CD4-positive, alpha-beta T cell (primary cell): ENCODE measurements at regions of chr3 and their contacts with region 1.

Region 1: DNA sequence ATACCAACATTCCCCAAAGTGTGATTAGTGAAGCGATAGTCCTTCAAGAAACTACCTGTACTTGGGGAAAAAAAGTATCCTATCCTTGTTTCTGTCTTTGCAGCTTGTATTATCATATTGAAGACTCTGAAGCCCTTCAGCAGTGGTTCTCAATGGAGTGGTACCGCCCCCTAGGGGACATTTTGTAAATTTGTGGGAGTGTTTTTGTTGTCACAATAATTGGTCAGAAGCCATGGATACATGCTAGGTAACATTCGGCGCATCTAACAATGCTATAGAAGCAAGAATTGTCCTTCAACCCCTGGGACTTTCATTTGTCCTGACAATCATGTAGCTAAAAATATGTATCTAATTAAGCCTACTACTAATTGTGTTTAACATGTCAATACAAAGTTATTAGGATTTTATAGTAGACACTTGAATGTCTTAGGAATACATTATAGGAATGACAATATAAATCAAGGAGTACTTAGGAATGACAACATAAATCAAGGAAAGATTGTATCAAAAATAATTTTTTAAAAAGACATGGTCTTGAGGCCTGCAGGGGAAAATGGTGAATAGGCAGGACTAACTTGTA is 53.7 kb downstream of the NMD3 start:
- DNase-seq: peak in 7 of 14 experiments; percentile 2 to 66 (median 45)
- ATAC-seq: no peak
- H3K4me3 ChIP-seq: no peak overlapping the region
- H3K4me3 Mint-ChIP-seq: no peak overlapping the region
- H3K27ac ChIP-seq: no peak overlapping the region
- H3K27ac Mint-ChIP-seq: no peak overlapping the region
- H3K4me1 ChIP-seq: no peaks in the 10 kb centered on the region
- H3K4me1 Mint-ChIP-seq: peaks cover 10% of the 10 kb centered on the region
- H3K27me3 ChIP-seq: no peaks in the 10 kb centered on the region
- H3K27me3 Mint-ChIP-seq: no peaks in the 10 kb centered on the region
- CTCF ChIP-seq: peak; percentile 50

Region 2: GRCh38 chr3:160707187-160707794 is 567.5 kb before region 1 on chr3:
- CTCF ChIA-PET with region 1: no interaction called
- POLR2A ChIA-PET with region 1: no interaction called
- intact Hi-C with region 1: loop called in 1 of 2 experiments (anchors 10 kb)
- DNase-seq: peak in 10 of 14 experiments; percentile 2 to 73 (median 21)
- ATAC-seq: no peak
- H3K4me3 ChIP-seq: no peak overlapping the region
- H3K4me3 Mint-ChIP-seq: no peak overlapping the region
- H3K27ac ChIP-seq: no peak overlapping the region
- H3K27ac Mint-ChIP-seq: no peak overlapping the region
- H3K4me1 ChIP-seq: no peaks in the 10 kb centered on the region
- H3K4me1 Mint-ChIP-seq: no peaks in the 10 kb centered on the region
- H3K27me3 ChIP-seq: peaks cover 11 to 27% of the 10 kb centered on the region in 2 experiments
- H3K27me3 Mint-ChIP-seq: peaks cover 46% of the 10 kb centered on the region
- CTCF ChIP-seq: peak; percentile 78

Region 3: DNA sequence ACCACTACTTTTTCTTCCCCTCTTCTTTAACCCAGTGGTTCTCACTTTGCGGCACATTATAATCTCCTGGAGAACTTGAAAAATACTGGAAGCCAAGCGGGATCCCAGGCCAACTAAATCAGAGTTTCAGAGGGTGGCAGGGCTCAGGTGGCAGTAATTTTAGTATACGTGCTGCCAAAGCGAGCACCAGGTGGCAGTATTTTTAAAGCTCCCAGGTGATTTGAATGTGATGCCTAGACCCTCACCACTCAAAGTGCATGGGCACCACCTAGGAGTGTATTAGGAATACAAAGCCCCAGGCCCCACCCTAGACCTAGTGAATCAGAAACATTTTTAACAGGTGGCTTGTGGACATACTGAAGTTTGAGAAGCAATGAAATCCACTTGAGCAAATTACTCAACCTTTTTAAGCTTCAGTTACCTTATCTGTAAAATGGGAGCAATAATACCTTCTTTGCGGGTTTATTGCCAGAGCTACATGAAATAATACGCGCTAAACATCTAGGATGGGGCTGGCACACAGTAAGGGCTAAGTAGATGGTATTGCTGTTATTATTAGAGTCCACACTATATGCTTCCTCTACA is 177.9 kb before region 1 on chr3:
- CTCF ChIA-PET with region 1: interaction called, 3 read pairs
- POLR2A ChIA-PET with region 1: no interaction called
- intact Hi-C with region 1: loop called in 1 of 2 experiments (anchors 10 kb)
- DNase-seq: peak in 5 of 14 experiments; percentile 12 to 41 (median 36)
- ATAC-seq: no peak
- H3K4me3 ChIP-seq: no peak overlapping the region
- H3K4me3 Mint-ChIP-seq: no peak overlapping the region
- H3K27ac ChIP-seq: no peak overlapping the region
- H3K27ac Mint-ChIP-seq: no peak overlapping the region
- H3K4me1 ChIP-seq: no peaks in the 10 kb centered on the region
- H3K4me1 Mint-ChIP-seq: no peaks in the 10 kb centered on the region
- H3K27me3 ChIP-seq: no peaks in the 10 kb centered on the region
- H3K27me3 Mint-ChIP-seq: no peaks in the 10 kb centered on the region
- CTCF ChIP-seq: peak; percentile 39

Region 4: DNA sequence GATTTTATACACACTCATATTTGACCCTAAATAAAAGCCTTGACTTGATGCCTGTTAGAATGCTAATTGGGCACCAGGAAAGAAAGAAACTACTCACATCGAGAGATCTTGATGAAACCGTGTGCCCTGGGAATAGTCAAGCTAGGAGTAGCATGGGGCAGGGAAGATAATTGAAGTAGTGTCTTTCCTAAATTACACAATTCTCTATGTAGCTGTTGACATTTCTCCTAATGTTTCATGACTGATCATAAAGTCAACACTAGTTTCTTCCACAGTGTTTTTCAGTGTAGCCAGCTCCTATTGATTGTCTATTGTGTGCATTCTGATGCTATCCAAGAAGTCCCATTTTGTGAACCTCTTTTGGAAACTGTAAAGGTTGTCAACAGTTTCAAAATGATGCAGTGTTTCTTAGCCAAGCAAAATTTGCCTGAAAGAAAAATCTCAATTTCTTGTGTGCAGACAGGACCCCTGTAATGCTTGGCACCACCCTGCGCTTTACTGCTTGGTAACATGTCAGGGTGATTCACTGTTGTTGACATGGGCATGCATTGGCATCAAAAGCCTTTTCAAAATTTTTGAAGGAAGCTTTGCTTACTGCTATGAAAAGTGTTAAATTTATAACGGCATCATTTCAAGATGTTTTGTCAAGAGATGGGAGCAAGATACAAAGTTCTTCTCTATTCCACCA is 169.3 kb after region 1 on chr3:
- CTCF ChIA-PET with region 1: no interaction called
- POLR2A ChIA-PET with region 1: no interaction called
- intact Hi-C with region 1: no loop called
- DNase-seq: no peak
- ATAC-seq: no peak
- H3K4me3 ChIP-seq: no peak overlapping the region
- H3K4me3 Mint-ChIP-seq: no peak overlapping the region
- H3K27ac ChIP-seq: no peak overlapping the region
- H3K27ac Mint-ChIP-seq: no peak overlapping the region
- H3K4me1 ChIP-seq: no peaks in the 10 kb centered on the region
- H3K4me1 Mint-ChIP-seq: no peaks in the 10 kb centered on the region
- H3K27me3 ChIP-seq: no peaks in the 10 kb centered on the region
- H3K27me3 Mint-ChIP-seq: peaks cover 11% of the 10 kb centered on the region
- CTCF ChIP-seq: no peak